ENCODE measurements at regions of chr20 and their contacts with region 1.

Region 1: GRCh38 chr20:1392823-1393506 is at the start of gene FKBP1A:
- DNase-seq: peak; percentile 78
- ATAC-seq: peak; percentile 96
- H3K4me3 ChIP-seq: peak within 1 kb of the TSS; percentile 98 to 99
- H3K27ac ChIP-seq: peak within 1 kb of the TSS; percentile 61
- H3K4me1 ChIP-seq: peaks cover 13 to 32% of the 10 kb centered on the region in 2 experiments; a peak in 3 of 4 replicates
- H3K27me3 ChIP-seq: no peaks in the 10 kb centered on the region
- CTCF ChIP-seq: 0 out of 6 replicates have a peak, but pooled peaks of 1 of the 3 experiments have one; percentile 4
- POLR2A ChIP-seq: peak; percentile 74
- RAD21 ChIP-seq: no peak
- total RNA-seq, gene FKBP1A: 259 TPM

Region 2: DNA sequence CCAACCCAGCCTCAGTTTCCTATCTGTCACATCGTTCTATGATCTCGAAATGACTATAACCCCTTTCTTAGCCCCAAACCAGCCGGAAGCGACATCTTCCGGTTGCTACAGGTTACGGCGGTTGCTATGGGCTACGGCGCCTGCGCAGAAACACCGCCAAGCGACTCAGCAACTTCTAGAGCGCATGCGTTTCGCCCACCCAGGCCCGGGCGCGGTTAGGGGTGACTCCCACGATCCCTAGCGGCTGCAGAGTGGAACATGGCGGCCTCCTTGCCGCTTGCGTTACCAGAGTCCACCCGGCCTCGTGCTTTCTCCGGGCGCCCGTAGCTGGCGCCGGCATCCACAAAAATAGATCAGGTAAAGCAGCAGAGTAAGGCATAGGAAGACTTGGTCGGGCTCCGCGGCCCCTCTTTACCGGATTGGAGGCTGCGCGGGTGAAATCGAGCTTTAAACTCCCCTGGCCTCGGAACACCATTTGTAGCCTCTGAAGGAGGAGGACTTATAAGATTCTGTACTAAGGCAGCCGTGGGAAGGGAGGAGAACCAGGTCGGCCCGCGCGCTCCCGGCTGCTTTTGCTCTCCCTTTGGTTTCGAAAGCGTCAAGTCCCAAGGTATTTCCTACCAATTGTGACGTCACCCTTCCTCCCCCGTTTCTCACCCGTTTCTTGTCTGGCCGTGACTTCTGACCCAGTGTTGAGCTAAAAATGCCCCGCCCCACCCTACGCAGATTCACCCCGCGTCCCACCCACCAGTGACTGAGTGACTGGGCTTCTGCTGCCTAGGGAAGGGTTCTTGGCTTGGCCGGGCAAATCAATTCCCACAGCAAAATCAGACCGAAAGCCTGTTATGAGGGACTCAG is 67.6 kb before region 1 on chr20:
- CTCF ChIA-PET with region 1: no interaction called
- POLR2A ChIA-PET with region 1: no interaction called
- RAD21 ChIA-PET with region 1: no interaction called
- intact Hi-C with region 1: loop called (anchors 5 kb)
- DNase-seq: peak; percentile 88
- ATAC-seq: peak; percentile 91
- H3K4me3 ChIP-seq: peak overlapping the region; percentile 93 to 97
- H3K27ac ChIP-seq: peak overlapping the region; percentile 71
- H3K4me1 ChIP-seq: peaks cover 32 to 52% of the 10 kb centered on the region in 2 experiments
- H3K27me3 ChIP-seq: no peaks in the 10 kb centered on the region
- CTCF ChIP-seq: no peak
- POLR2A ChIP-seq: peak; percentile 93
- RAD21 ChIP-seq: no peak

Region 3: GRCh38 chr20:1375515-1375914 is 17.4 kb before region 1 on chr20:
- CTCF ChIA-PET with region 1: no interaction called
- POLR2A ChIA-PET with region 1: no interaction called
- RAD21 ChIA-PET with region 1: no interaction called
- intact Hi-C with region 1: no loop called
- DNase-seq: no peak
- ATAC-seq: no peak
- H3K4me3 ChIP-seq: no peak overlapping the region
- H3K27ac ChIP-seq: no peak overlapping the region
- H3K4me1 ChIP-seq: peaks cover 17 to 31% of the 10 kb centered on the region in 2 experiments; a peak in 3 of 4 replicates
- H3K27me3 ChIP-seq: no peaks in the 10 kb centered on the region
- CTCF ChIP-seq: no peak
- POLR2A ChIP-seq: no peak
- RAD21 ChIP-seq: no peak

Region 4: GRCh38 chr20:1427457-1428054 is 34.6 kb after region 1 on chr20:
- CTCF ChIA-PET with region 1: no interaction called
- POLR2A ChIA-PET with region 1: interaction called, 3 read pairs
- RAD21 ChIA-PET with region 1: no interaction called
- intact Hi-C with region 1: loop called (anchors 5 kb)
- DNase-seq: no peak
- ATAC-seq: peak; percentile 60
- H3K4me3 ChIP-seq: no peak overlapping the region
- H3K27ac ChIP-seq: no peak overlapping the region
- H3K4me1 ChIP-seq: peaks cover 4 to 16% of the 10 kb centered on the region in 2 experiments; a peak in 3 of 4 replicates
- H3K27me3 ChIP-seq: no peaks in the 10 kb centered on the region
- CTCF ChIP-seq: no peak
- POLR2A ChIP-seq: no peak
- RAD21 ChIP-seq: no peak